CD4-positive, alpha-beta memory T cell (primary cell): ENCODE measurements at regions of chrX and their contacts with region 1.

Region 1: DNA sequence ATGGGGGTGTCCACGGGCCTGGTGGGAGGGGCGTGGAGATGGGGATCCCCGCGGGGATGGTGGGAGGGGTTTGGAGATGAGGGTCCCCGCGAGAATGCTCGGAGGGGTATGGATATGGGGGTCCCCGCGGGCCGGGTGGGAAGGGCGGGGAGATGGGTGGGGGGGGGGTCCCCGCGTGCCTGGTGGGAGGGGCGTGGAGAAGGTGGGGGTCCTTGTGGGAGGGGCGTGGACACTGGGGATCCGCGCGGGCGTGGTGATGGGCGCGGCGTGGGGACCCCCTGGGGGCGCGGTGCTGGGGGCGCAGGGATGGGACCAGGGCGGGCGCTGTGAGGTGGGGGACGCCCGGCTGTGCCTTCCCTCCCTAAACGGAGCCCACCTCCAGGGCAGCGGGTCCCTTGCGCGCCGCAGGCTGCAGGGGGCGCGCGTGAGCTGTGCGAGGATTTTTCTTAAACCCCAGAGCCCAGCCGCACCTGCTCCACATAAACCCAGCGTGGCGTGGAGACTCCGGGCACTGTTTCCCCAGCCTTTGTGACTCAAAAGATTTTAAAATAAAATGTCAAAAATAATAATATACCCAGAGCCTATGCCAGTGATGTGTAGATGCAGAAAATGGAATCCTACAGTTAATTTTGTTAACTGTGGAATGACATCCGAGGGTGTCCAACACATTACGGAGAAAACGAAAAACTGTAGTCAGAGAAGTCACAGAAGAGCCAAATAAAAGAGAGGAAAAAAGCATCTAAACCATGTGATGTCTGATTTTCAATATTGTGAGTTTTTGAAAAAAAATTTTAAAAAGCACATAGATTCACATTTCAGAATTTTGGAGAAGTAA is 1.5 kb upstream of the ASMTL start:
- DNase-seq: peak; percentile 86 to 90 (median 88)
- H3K4me3 ChIP-seq: peak overlapping the region in 1 of 2 donors; percentile 54
- H3K4me3 Mint-ChIP-seq: peak overlapping the region; percentile 63 to 80 (median 75)
- H3K27ac ChIP-seq: peak overlapping the region; percentile 81
- H3K27ac Mint-ChIP-seq: peak overlapping the region; percentile 78 to 93 (median 88)
- H3K4me1 ChIP-seq: peaks cover 43% of the 10 kb centered on the region
- H3K4me1 Mint-ChIP-seq: peaks cover 14 to 31% (median 21%) of the 10 kb centered on the region in 4 donors
- H3K27me3 ChIP-seq: no peaks in the 10 kb centered on the region
- H3K27me3 Mint-ChIP-seq: no peaks in the 10 kb centered on the region

Region 2: GRCh38 chrX:386768-387575 is 1067.2 kb before region 1 on chrX and contains the start of gene PPP2R3B:
- CTCF ChIA-PET with region 1: no interaction called
- POLR2A ChIA-PET with region 1: no interaction called
- intact Hi-C with region 1: loop called (anchors 2 kb)
- DNase-seq: peak; percentile 98 to 100 (median 99)
- H3K4me3 ChIP-seq: peak within 1 kb of the TSS; percentile 29 to 99
- H3K4me3 Mint-ChIP-seq: peak within 1 kb of the TSS; percentile 85 to 96 (median 91)
- H3K27ac ChIP-seq: peak within 1 kb of the TSS; percentile 100
- H3K27ac Mint-ChIP-seq: peak within 1 kb of the TSS; percentile 92 to 100 (median 98)
- H3K4me1 ChIP-seq: peaks cover 6% of the 10 kb centered on the region
- H3K4me1 Mint-ChIP-seq: peaks cover 9 to 11% (median 10%) of the 10 kb centered on the region in 4 donors
- H3K27me3 ChIP-seq: no peaks in the 10 kb centered on the region
- H3K27me3 Mint-ChIP-seq: peaks cover 0 to 1% of the 10 kb centered on the region in 2 donors
- total RNA-seq, gene PPP2R3B: 42.3 to 45.2 TPM

Region 3: GRCh38 chrX:1391707-1392375 is 62.3 kb before region 1 on chrX and contains the start of gene SLC25A6:
- CTCF ChIA-PET with region 1: no interaction called
- POLR2A ChIA-PET with region 1: no interaction called
- intact Hi-C with region 1: loop called (anchors 1 kb)
- DNase-seq: peak; percentile 98 to 99 (median 99)
- H3K4me3 ChIP-seq: peak within 1 kb of the TSS; percentile 61 to 94
- H3K4me3 Mint-ChIP-seq: peak within 1 kb of the TSS; percentile 88 to 94 (median 91)
- H3K27ac ChIP-seq: peak within 1 kb of the TSS; percentile 94
- H3K27ac Mint-ChIP-seq: peak within 1 kb of the TSS; percentile 83 to 96 (median 90)
- H3K4me1 ChIP-seq: peaks cover 47% of the 10 kb centered on the region
- H3K4me1 Mint-ChIP-seq: peaks cover 16 to 52% (median 34%) of the 10 kb centered on the region in 4 donors
- H3K27me3 ChIP-seq: no peaks in the 10 kb centered on the region
- H3K27me3 Mint-ChIP-seq: no peaks in the 10 kb centered on the region
- total RNA-seq, gene SLC25A6: 249 to 252 TPM

Region 4: DNA sequence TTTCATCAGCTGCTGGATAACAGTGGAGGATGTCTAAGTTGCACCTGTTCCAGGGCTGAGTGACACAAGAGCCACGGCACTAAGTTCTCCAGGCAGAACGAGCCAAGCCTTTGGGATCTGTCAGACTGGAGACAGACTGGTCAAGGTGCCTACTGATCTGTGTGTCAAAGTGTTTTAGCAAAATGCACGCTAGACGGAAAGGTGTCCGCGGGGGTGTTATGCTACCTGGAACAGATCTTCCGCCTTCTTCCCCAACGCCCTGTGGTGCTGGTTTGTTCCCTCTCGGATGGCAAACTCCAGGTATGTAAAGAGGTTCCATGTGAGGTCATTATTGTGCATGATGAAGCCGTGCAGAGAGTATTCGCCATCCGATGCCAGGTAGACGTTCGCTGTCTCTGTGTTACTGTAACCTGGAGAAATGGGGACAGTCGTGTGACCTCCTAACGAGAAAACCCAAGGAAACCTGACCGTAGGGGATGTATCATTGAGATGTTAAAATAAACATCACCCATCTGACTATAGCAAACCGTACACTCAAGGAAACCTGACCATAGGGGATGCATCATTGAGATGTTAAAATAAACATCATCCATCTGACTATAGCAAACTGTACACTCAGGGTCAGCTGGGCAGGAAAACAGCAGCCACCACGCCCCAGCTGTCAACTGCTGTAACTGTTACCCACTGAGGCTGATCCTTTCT is 32.6 kb before region 1 on chrX:
- CTCF ChIA-PET with region 1: no interaction called
- POLR2A ChIA-PET with region 1: no interaction called
- intact Hi-C with region 1: no loop called
- DNase-seq: peak in 1 of 5 donors; percentile 25
- H3K4me3 ChIP-seq: no peak overlapping the region
- H3K4me3 Mint-ChIP-seq: peak overlapping the region in 1 of 8 donors; percentile 2
- H3K27ac ChIP-seq: no peak overlapping the region
- H3K27ac Mint-ChIP-seq: peak overlapping the region in 1 of 7 donors; percentile 36
- H3K4me1 ChIP-seq: no peaks in the 10 kb centered on the region
- H3K4me1 Mint-ChIP-seq: peaks cover 0 to 9% (median 2%) of the 10 kb centered on the region in 4 donors
- H3K27me3 ChIP-seq: no peaks in the 10 kb centered on the region
- H3K27me3 Mint-ChIP-seq: no peaks in the 10 kb centered on the region

Region 5: DNA sequence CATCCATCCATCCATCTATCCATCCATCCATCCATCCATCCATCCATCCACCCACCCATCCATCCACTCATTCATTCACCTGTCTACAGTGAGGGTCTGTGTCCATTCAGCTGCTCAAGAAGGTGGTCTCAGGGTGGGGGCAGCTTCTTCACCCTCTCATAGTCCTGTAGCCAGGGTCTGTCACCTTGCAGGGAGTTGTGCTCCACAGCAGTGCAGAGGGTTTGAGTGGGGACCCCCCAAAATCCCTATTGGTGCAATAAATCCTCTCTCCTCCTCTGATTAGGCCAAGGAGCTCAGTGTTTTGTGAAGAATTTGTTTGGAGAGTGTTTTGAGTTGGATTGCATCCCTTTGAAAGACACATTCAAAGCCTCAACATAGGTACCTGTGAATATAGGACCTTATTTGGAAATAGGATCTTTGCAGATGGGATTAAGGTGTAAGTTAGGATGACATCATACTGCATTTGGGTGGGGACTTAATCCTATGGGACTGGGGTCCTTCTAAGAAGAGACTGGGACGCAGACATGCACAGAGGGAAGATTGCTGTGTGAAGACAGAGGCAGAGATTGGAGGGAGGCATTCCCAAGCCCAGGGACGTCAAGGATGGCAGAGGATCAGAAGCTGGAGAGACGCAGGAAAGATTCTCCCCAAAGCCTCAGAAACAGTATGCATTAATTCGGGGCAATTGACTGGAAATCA is 70.9 kb after region 1 on chrX:
- CTCF ChIA-PET with region 1: no interaction called
- POLR2A ChIA-PET with region 1: no interaction called
- intact Hi-C with region 1: no loop called
- DNase-seq: no peak
- H3K4me3 ChIP-seq: no peak overlapping the region
- H3K4me3 Mint-ChIP-seq: no peak overlapping the region
- H3K27ac ChIP-seq: no peak overlapping the region
- H3K27ac Mint-ChIP-seq: no peak overlapping the region
- H3K4me1 ChIP-seq: peaks cover 89% of the 10 kb centered on the region
- H3K4me1 Mint-ChIP-seq: peaks cover 20 to 29% (median 25%) of the 10 kb centered on the region in 4 donors
- H3K27me3 ChIP-seq: no peaks in the 10 kb centered on the region
- H3K27me3 Mint-ChIP-seq: no peaks in the 10 kb centered on the region

Region 6: GRCh38 chrX:1537035-1537715 is 83.0 kb after region 1 on chrX and contains the start of gene P2RY8:
- CTCF ChIA-PET with region 1: no interaction called
- POLR2A ChIA-PET with region 1: no interaction called
- intact Hi-C with region 1: loop called (anchors 1 kb)
- DNase-seq: peak; percentile 78 to 86 (median 81)
- H3K4me3 ChIP-seq: peak within 1 kb of the TSS; percentile 94
- H3K4me3 Mint-ChIP-seq: peak within 1 kb of the TSS; percentile 93 to 99 (median 98)
- H3K27ac ChIP-seq: peak within 1 kb of the TSS; percentile 78
- H3K27ac Mint-ChIP-seq: peak within 1 kb of the TSS; percentile 95 to 100 (median 98)
- H3K4me1 ChIP-seq: peaks cover 24% of the 10 kb centered on the region
- H3K4me1 Mint-ChIP-seq: peaks cover 12 to 34% (median 15%) of the 10 kb centered on the region in 4 donors
- H3K27me3 ChIP-seq: no peaks in the 10 kb centered on the region
- H3K27me3 Mint-ChIP-seq: no peaks in the 10 kb centered on the region
- total RNA-seq, gene P2RY8: 195 TPM

Region 7: DNA sequence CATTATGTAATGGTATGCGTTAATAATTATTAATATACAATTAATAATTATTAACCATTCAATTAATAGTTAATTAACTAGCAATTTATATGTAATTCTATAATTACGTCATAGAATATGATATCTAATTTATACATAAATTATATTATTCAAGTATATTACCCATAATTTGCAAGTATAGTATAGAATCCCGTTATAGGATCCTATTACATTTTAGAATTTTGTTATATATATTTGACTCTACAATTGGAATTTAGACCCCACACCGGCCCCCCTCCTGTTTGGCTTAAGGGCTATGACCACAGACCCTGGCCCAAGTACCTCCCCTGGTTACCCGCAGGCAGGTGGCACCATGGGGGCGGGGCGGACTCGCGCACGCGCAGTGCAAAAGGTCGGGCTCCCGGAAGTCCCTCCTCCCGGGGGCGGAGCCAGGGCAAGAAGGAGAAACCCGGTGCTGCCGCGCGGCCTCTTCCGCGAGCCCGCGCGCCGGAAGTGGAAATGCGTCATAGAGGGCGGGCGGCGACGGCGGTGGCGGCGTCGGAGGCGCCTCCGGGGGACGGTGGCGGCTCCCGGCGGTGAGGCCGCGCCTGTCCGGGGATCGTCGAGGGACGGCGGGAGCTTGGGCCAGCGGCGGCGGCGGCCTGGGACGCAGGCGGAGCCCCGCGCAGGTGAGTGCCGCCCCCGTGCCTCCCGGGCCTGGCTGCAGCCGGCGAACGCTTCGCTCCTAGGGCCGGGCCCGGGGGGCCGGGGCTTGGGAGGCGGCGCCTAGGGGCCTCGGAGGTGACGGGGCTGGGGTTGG is 137.1 kb after region 1 on chrX and contains the start of gene AKAP17A:
- CTCF ChIA-PET with region 1: no interaction called
- POLR2A ChIA-PET with region 1: no interaction called
- intact Hi-C with region 1: loop called (anchors 1 kb)
- DNase-seq: peak; percentile 93 to 99 (median 97)
- H3K4me3 ChIP-seq: peak within 1 kb of the TSS; percentile 21 to 77
- H3K4me3 Mint-ChIP-seq: peak within 1 kb of the TSS; percentile 89 to 93 (median 92)
- H3K27ac ChIP-seq: peak within 1 kb of the TSS; percentile 73
- H3K27ac Mint-ChIP-seq: peak within 1 kb of the TSS; percentile 92 to 96 (median 94)
- H3K4me1 ChIP-seq: peaks cover 41% of the 10 kb centered on the region
- H3K4me1 Mint-ChIP-seq: peaks cover 10 to 33% (median 24%) of the 10 kb centered on the region in 4 donors
- H3K27me3 ChIP-seq: no peaks in the 10 kb centered on the region
- H3K27me3 Mint-ChIP-seq: no peaks in the 10 kb centered on the region
- total RNA-seq, gene AKAP17A: 147 to 150 TPM

Region 8: GRCh38 chrX:2595258-2595657 is 1141.1 kb after region 1 on chrX:
- CTCF ChIA-PET with region 1: no interaction called
- POLR2A ChIA-PET with region 1: no interaction called
- intact Hi-C with region 1: loop called (anchors 2 kb)
- DNase-seq: no peak
- H3K4me3 ChIP-seq: no peak overlapping the region
- H3K4me3 Mint-ChIP-seq: no peak overlapping the region
- H3K27ac ChIP-seq: no peak overlapping the region
- H3K27ac Mint-ChIP-seq: no peak overlapping the region
- H3K4me1 ChIP-seq: no peaks in the 10 kb centered on the region
- H3K4me1 Mint-ChIP-seq: peaks cover 11 to 16% (median 15%) of the 10 kb centered on the region in 4 donors
- H3K27me3 ChIP-seq: no peaks in the 10 kb centered on the region
- H3K27me3 Mint-ChIP-seq: no peaks in the 10 kb centered on the region

Region 9: DNA sequence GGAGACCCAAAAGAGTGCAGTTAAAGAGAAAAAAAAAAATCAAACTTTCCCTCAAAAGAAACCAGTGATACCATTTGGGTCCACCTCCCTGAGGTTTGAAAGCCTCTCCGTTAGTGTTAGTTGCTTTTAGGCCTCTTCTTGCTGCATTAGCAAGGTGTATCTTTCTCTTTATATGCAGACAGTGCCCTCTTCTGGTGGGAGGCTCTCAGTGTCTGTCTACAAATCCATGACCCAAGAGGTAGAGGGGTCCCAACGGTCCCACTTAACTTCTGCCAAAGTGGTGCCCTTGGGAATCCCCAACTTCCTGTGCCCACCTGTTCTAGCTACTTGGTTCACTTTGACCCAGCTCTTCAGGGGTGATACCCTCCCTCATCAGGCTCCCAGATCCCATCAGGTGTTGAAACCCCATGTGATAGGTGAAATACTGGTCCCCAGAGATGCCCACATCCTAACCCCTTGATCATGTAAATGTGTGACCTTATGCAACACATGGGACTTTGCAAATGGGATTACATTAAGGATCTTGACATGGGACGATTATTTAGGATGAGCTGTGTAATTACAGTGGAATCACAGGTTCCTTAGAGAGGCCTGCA is 1173.2 kb after region 1 on chrX:
- CTCF ChIA-PET with region 1: no interaction called
- POLR2A ChIA-PET with region 1: no interaction called
- intact Hi-C with region 1: loop called (anchors 1 kb)
- DNase-seq: peak in 4 of 5 donors; percentile 32 to 43 (median 38)
- H3K4me3 ChIP-seq: no peak overlapping the region
- H3K4me3 Mint-ChIP-seq: peak overlapping the region in 1 of 8 donors; percentile 17
- H3K27ac ChIP-seq: no peak overlapping the region
- H3K27ac Mint-ChIP-seq: peak overlapping the region in 5 of 7 donors; percentile 48 to 92 (median 65)
- H3K4me1 ChIP-seq: peaks cover 19% of the 10 kb centered on the region
- H3K4me1 Mint-ChIP-seq: peaks cover 31 to 49% (median 38%) of the 10 kb centered on the region in 4 donors
- H3K27me3 ChIP-seq: no peaks in the 10 kb centered on the region
- H3K27me3 Mint-ChIP-seq: no peaks in the 10 kb centered on the region